Activated CD8-positive, alpha-beta memory T cell treated with anti-CD3 and anti-CD28 coated beads, Interleukin-2, amount 10 ng/mL, durations not matched to agents 7 days and 5 days (primary cell): ENCODE measurements at regions of chr9 and their contacts with region 1.

Region 1: DNA sequence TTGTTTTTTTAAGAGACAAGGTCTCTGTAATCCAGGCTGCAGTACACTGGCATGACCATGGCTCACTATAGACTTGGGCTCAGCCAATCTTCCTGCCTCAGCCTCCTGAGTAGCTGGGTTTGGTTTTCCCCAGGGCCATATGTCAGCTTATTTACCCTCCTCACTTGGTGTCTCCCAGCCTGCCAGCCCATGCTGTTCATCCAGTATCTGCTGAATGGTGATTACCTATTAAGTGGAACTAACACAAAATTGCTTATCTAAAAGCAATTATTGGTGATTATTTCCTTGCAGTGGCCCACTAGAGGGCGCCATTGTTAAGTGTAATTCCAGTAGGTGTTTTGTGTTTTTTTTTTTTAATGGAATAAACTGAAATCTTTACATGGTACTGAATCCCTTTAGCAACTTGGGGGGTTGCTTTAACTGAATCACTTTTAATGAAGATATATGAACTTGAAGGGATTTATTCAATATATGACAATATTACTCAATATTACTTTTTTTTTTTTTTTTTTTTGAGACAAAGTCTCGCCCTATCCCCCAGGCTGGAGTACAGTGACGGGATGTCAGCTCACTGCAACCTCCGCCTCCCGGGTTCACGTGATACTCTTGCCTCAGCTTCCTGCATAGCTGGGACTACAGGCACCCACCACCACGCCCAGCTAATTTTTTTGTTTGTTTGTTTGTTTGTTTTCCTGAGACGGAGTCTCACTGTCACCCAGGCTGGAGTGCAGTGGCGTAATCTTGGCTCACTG is 13.8 kb downstream of the EXOSC2 start:
- DNase-seq: peak; percentile 77
- ATAC-seq: peak; percentile 41
- H3K4me3 Mint-ChIP-seq: no peak overlapping the region
- H3K27ac Mint-ChIP-seq: no peak overlapping the region
- H3K4me1 Mint-ChIP-seq: peaks cover 6% of the 10 kb centered on the region
- H3K27me3 Mint-ChIP-seq: no peaks in the 10 kb centered on the region

Region 2: DNA sequence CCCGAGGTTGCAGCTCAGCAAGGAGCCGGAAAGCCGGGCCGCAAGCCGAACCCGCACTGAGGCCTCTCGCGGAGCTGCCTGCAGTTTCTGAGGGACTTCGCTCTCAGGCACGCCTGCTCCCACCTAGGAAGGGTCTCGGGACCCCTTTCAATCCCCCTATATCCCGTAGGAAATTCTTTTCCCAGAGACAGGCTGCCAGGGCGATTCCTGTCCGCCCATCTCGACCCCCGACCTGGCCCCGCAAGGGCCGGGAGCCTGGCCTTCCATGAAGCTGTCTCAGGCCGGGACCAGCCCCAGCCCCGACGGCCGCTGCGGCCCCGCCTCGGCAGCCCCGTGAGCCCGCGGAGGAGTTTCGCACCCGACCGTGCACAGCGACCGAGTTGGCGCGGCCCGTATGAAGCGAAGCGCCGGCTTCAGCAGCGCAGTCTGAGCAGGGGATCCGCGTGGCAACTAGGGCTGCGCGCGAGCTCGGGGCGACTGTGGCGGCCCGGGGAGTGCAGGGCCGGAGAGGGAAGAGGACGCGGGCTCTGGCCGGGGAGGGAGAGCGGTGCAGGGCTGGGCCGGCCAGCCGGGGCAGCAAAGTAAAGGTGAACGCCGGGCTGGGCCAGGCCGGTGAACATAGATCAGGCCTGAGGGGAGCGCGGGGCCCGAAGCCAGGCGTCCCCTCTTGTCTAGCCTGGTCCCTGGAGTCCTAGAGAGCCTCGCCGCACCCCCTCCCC is 44.0 kb before region 1 on chr9:
- CTCF ChIA-PET with region 1: no interaction called
- DNase-seq: no peak
- ATAC-seq: no peak
- H3K4me3 Mint-ChIP-seq: no peak overlapping the region
- H3K27ac Mint-ChIP-seq: no peak overlapping the region
- H3K4me1 Mint-ChIP-seq: peaks cover 7% of the 10 kb centered on the region
- H3K27me3 Mint-ChIP-seq: peaks cover 80% of the 10 kb centered on the region

Region 3: DNA sequence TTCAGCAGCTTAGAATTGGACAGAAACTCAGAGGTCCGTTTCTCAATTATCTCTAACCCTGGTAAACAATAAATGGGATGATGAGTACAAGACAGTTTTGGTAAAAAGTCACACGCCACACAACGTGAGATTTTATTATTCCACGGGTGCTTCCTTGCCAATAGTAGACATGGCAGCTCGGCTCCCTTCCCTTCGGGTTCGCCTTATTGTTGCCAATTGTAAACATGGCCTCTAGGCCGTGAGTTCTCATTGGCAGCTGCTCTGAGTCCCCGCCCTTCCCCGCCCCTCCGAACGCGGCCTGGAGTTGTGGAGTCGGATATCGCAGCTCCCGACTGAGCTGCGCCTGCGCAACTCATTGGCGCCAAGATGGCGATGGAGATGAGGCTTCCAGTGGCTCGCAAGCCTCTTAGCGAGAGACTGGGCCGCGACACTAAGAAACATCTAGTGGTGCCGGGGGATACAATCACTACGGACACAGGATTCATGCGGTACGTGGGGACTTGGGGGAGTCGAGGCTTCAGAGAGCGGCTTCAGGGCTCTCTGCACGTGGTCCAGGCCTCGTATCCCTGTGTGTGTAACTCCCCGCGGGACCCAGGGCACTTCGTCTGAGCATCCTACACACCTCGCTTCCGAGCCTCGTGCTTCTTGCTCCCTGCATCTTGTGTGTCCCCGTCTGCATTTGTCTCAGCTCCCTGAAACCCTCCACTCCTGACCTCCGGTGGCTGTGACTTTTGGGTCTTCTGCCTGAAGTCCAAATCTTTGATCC is 13.8 kb before region 1 on chr9 and contains the start of gene EXOSC2:
- CTCF ChIA-PET with region 1: interaction called, 26 read pairs
- DNase-seq: peak; percentile 99
- ATAC-seq: peak; percentile 99
- H3K4me3 Mint-ChIP-seq: peak within 1 kb of the TSS; percentile 96
- H3K27ac Mint-ChIP-seq: peak within 1 kb of the TSS; percentile 92
- H3K4me1 Mint-ChIP-seq: peaks cover 56% of the 10 kb centered on the region
- H3K27me3 Mint-ChIP-seq: no peaks in the 10 kb centered on the region
- total RNA-seq, gene EXOSC2: 69.9 to 81.3 TPM

Region 4: GRCh38 chr9:130857864-130858738 is 150.7 kb after region 1 on chr9:
- CTCF ChIA-PET with region 1: interaction called, 16 read pairs
- DNase-seq: no peak
- ATAC-seq: no peak
- H3K4me3 Mint-ChIP-seq: no peak overlapping the region
- H3K27ac Mint-ChIP-seq: no peak overlapping the region
- H3K4me1 Mint-ChIP-seq: no peaks in the 10 kb centered on the region
- H3K27me3 Mint-ChIP-seq: no peaks in the 10 kb centered on the region